Ascending aorta (tissue), 2 donors: ENCODE measurements at regions of chr14 and their contacts with region 1.

Region 1: GRCh38 chr14:64986578-64987571 is at the start of gene FNTB:
- DNase-seq: peak; percentile 81 to 95
- H3K4me3 ChIP-seq: peak within 1 kb of the TSS; percentile 83 to 89
- H3K27ac ChIP-seq: peak within 1 kb of the TSS; percentile 61 to 84
- H3K4me1 ChIP-seq: peaks cover 0 to 3% of the 10 kb centered on the region in 2 donors
- H3K27me3 ChIP-seq: no peaks in the 10 kb centered on the region
- CTCF ChIP-seq: peak; percentile 47 to 73 (median 73)
- total RNA-seq, gene FNTB: 13.9 TPM

Region 2: DNA sequence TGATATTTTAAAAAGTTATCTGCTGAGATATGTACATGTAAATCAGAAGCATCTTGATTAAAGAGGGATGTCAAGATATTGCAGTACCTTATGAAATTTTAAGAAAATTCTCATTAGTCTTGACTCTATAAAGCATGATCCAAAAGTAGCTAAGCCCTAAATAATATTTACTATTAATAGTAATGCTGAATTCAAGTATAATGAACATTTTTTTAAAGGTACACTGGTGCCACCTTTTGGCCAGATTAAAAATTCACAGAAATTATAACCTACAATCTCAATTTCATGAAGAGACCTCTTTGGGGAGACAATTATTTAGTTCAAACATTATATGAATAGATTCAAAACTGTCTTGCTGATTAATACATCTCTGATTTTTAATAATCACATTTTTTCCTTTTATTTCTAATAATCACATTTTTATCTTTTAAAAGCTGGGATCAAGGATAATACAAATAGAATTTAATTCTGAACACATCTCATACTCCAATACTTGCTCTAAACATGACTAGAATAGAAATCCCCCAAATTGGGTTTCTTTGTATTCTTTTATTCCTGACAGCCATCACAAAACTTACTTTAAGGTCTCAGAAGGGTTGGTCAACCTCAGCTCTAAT is 508.1 kb before region 1 on chr14:
- intact Hi-C with region 1: no loop called
- DNase-seq: no peak
- H3K4me3 ChIP-seq: no peak overlapping the region
- H3K27ac ChIP-seq: peak overlapping the region in 1 of 2 donors; percentile 18
- H3K4me1 ChIP-seq: no peaks in the 10 kb centered on the region
- H3K27me3 ChIP-seq: no peaks in the 10 kb centered on the region
- CTCF ChIP-seq: peak in 2 of 3 experiments; percentile 48 to 63

Region 3: DNA sequence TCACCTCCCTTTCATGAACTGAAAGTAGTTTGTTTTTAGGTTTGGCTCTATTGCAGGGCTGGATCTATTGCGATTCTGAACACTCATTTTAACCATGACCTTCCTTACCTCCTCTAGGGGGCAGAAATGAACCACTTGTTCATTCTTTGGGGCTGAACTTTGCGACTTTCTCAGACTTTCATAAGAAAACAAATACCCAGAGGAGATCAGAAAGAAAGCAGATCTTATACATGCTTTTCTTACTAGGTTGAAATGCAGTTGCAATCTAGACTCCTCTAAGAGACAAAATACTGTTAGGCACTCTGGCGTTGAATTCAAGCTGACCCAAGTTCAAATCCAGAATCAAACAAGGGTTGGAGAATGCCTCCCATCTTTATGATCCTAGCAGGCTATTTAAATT is 315.3 kb before region 1 on chr14:
- intact Hi-C with region 1: loop called (anchors 5 kb)
- DNase-seq: no peak
- H3K4me3 ChIP-seq: no peak overlapping the region
- H3K27ac ChIP-seq: no peak overlapping the region
- H3K4me1 ChIP-seq: peaks cover 0 to 5% of the 10 kb centered on the region in 2 donors
- H3K27me3 ChIP-seq: no peaks in the 10 kb centered on the region
- CTCF ChIP-seq: peak; percentile 70 to 80 (median 78)

Region 4: DNA sequence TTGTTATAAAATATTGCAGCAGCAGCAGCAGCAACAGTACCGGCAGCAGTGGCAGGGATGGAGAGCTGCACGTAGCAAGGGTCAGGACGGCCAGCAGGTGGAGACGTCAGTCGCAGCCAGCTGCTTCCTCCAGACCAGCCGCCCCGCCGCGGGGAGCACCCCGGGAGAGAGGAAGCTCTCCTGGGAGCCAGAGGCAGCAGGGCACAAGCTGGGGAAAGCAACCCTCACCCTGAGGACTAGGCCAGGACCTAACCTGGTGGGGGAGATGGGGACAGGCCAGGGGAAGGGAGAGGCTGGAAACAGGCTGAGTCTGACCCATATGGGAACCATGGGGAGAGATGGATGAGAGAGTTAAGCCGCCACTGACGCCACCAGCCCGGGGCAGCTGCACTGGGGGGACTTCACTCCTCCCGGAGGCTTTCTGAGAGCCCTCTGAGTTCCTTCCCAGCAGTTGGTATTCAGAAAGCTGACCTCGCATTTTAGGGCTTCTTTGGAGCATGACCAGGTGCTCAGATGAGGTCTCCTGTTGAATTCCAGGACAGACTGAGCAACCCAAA is 163.5 kb before region 1 on chr14:
- intact Hi-C with region 1: loop called (anchors 1 kb)
- DNase-seq: peak; percentile 22 to 84
- H3K4me3 ChIP-seq: peak overlapping the region; percentile 13 to 43
- H3K27ac ChIP-seq: no peak overlapping the region
- H3K4me1 ChIP-seq: peaks cover 0 to 9% of the 10 kb centered on the region in 2 donors
- H3K27me3 ChIP-seq: no peaks in the 10 kb centered on the region
- CTCF ChIP-seq: peak; percentile 79 to 89 (median 85)

Region 5: DNA sequence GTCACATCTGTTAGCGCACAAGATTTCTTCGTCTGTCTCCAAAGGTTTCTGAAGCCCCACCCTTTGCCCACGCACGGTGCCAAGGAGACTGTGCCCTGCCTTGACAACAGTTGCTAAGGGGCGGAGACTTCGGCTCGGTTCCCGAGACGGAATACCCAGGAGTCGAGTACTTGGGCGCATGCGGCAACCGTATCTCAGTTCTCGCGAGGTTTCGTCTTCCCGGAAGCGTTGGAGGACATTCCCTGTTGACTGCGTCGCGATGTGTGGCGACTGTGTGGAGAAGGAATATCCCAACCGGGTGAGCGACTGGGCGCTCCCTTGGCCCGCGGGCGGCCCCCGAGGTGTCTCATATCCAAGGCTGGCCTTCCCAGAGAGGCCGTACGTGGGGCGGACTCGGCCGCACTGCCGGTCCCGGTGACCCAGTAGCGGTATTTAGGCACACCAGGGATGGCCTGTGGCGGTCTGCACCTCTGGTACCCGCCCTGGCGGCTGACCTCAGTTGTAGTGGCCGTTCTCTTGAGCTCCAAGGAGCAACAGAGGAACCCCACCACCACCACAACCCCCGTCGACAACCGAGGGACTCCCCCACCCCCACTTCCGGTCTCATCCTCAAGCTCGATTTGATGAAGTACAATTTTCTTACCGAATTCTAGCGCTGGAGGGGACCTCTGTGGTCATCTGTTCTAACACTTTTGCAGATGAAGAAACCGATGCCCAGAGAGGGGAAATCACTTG is 72.5 kb before region 1 on chr14 and contains the start of gene CHURC1:
- intact Hi-C with region 1: loop called (anchors 2 kb)
- DNase-seq: peak; percentile 98 to 100
- H3K4me3 ChIP-seq: peak within 1 kb of the TSS; percentile 90 to 99
- H3K27ac ChIP-seq: peak within 1 kb of the TSS; percentile 94 to 98
- H3K4me1 ChIP-seq: peaks cover 3 to 30% of the 10 kb centered on the region in 2 donors
- H3K27me3 ChIP-seq: no peaks in the 10 kb centered on the region
- CTCF ChIP-seq: no peak
- total RNA-seq, gene CHURC1: 31.9 TPM

Region 6: GRCh38 chr14:65102441-65103149 is 115.7 kb after region 1 on chr14 and contains the start of gene MAX:
- intact Hi-C with region 1: loop called (anchors 1 kb)
- DNase-seq: peak; percentile 97 to 99
- H3K4me3 ChIP-seq: peak within 1 kb of the TSS; percentile 89 to 93
- H3K27ac ChIP-seq: peak within 1 kb of the TSS; percentile 81 to 88
- H3K4me1 ChIP-seq: peaks cover 6 to 32% of the 10 kb centered on the region in 2 donors
- H3K27me3 ChIP-seq: no peaks in the 10 kb centered on the region
- CTCF ChIP-seq: no peak
- total RNA-seq, gene MAX: 26.8 TPM

Region 7: DNA sequence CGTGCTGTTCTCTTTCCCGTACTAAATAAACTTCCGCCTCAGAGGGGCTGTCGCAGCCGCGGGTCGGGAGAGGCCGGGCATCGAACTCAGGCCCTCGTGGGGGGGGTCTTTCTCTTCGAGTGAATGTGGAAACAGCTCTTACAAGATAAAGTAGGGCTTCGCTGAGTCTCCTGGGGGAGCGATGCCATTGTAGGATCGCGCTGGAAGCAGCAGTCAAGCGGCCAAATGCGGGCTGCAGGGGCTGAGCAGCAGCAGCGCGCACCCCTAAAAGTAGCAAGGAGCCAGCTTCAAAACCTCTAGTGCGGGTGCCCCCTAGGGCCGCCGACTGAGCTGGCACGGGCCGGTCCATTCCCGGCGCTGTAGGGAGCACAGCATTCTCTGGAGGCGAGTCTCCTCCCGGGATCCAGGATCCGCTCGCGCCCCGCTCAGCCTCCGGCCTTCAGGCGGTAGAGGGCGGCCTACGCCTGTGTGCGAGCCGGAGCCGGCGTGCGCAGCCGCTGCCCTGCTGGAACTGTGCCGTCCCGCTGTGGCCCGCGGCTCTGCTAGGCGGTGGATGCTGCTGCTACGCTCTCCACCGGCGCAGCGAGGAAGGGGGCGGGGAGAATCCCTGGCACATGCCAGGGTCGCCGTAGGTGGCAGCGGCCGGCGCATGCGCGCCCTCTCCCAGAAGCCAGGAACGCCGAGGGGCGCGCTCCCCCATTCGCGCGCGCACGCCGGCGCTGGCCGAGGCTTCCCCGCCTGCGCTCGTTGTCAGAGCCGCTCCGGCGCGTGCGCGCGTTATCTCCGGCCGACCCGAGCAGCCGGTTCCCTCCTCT is 425.4 kb after region 1 on chr14 and contains the start of gene FUT8:
- intact Hi-C with region 1: loop called (anchors 2 kb)
- DNase-seq: peak; percentile 81 to 97
- H3K4me3 ChIP-seq: peak within 1 kb of the TSS; percentile 87 to 95
- H3K27ac ChIP-seq: peak within 1 kb of the TSS; percentile 92 to 95
- H3K4me1 ChIP-seq: peaks cover 0 to 11% of the 10 kb centered on the region in 2 donors
- H3K27me3 ChIP-seq: no peaks in the 10 kb centered on the region
- CTCF ChIP-seq: peak; percentile 32 to 61 (median 60)
- total RNA-seq, gene FUT8: 12.9 TPM

Region 8: DNA sequence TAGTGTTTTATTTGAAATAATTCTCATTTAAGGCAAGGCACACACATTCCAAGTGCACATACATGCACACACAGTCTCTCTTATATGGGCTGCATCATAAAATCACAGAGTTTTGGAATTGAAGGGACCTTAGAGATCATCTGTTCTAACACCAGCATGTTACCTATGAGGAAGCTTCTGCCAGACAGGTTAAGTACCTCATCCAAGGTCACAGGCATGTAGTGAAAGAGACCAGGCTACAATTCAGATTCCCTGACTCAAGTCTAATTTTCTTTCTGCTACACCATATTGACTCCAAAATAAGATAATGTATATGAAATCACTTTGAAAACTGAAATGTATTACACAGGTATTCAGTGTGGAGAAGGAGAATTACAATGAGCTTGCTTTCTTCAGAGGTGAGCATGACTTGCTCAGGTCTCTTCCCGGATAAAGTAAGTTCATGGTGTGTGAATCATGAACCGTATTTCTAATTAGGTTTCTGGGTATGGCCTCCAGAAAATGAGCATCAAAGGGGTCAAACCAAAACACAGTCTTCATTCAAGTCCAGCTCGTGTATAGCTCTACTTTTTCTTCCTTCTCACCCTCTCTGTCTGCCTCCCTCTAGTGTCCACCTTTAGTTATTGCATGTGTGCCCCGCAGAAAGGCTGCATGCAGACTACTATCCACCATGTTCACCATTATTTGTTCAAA is 837.6 kb after region 1 on chr14:
- intact Hi-C with region 1: loop called (anchors 5 kb)
- DNase-seq: no peak
- H3K4me3 ChIP-seq: no peak overlapping the region
- H3K27ac ChIP-seq: no peak overlapping the region
- H3K4me1 ChIP-seq: no peaks in the 10 kb centered on the region
- H3K27me3 ChIP-seq: no peaks in the 10 kb centered on the region
- CTCF ChIP-seq: peak; percentile 66 to 89 (median 77)